H1 (cell line): ENCODE measurements at regions of chr14 and their contacts with region 1.

Region 1: DNA sequence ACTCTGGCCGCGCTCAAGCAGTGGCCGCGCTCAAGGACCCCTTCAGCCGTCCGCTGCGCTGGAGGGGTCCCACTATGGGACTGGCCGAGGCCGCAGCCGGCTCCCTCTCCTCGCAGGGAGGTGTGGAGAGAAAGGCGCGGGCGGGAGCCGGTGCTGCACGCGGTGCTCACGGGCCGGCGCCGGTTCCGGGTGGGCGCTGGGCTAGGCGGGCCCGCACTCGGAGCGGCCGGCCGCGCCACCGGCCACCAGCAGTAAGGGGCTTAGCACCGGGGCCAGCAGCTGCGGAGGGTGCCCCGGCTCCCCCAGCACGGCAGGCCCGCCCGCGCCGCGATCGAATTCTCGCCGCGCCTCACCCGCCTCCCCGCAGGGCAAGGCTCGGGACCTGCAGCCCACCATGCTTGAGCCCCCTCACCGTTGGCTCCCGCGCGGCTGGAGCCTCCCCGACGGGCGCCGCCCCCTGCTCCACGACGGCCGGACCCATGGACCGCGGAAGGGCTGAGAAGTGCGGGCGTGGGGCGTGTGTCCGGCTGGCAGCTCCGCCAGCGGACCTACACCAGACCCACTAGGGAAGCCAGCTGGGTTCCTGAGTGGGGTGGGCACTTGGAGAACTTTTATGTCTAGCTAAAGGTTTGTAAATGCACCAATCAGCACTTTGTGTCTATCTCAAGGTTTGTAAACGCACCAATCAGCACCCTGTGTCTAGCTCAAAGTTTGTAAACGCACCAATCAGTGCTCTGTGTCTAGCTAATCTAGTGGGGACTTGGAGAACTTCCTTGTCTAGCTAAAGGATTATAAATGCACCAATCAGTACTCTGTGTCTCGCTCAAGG is 49.5 kb downstream of the KLHL28 start:
- DNase-seq: no peak
- H3K4me3 ChIP-seq: no peak overlapping the region
- H3K27ac ChIP-seq: no peak overlapping the region
- H3K4me1 ChIP-seq: peaks cover 0 to 2% (median 0%) of the 10 kb centered on the region in 4 experiments; a peak in 1 of 7 replicates
- H3K27me3 ChIP-seq: no peaks in the 10 kb centered on the region
- CTCF ChIP-seq: no peak
- EP300 ChIP-seq: no peak
- POLR2A ChIP-seq: no peak
- RAD21 ChIP-seq: no peak

Region 2: GRCh38 chr14:45083971-45084722 is 171.9 kb after region 1 on chr14 and contains the start of gene PRPF39:
- CTCF ChIA-PET with region 1: interaction called, 10 read pairs
- POLR2A ChIA-PET with region 1: interaction called, 4 read pairs
- DNase-seq: peak; percentile 72 to 96
- H3K4me3 ChIP-seq: peak within 1 kb of the TSS; percentile 82 to 90 (median 86)
- H3K27ac ChIP-seq: peak within 1 kb of the TSS; percentile 81
- H3K4me1 ChIP-seq: peaks cover 0 to 6% (median 4%) of the 10 kb centered on the region in 4 experiments; a peak in 3 of 7 replicates
- H3K27me3 ChIP-seq: no peaks in the 10 kb centered on the region
- CTCF ChIP-seq: no peak
- EP300 ChIP-seq: no peak
- POLR2A ChIP-seq: peak; percentile 88 to 95
- RAD21 ChIP-seq: no peak
- total RNA-seq, gene PRPF39: 36.7 and 43.3 TPM in 2 replicates

Region 3: DNA sequence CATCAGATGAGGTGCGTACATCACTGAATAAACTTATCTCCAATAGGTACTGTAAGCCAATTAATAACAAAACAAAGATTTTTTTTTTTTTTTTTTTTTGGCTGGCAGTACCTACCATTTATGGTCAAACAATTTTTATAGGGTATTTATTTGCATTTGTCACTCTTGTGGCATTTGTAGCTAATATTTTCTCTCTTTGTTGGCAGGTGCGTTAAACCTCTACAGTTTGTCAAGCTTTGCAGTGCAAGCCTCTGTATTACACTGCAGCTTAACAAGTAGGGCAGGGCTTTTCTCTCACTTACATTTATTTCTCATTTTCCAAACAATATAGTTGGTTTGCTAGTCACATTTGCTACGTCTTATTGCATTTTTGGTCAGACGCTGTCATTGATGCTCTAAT is 184.0 kb after region 1 on chr14:
- CTCF ChIA-PET with region 1: interaction called, 17 read pairs
- POLR2A ChIA-PET with region 1: no interaction called
- DNase-seq: no peak
- H3K4me3 ChIP-seq: no peak overlapping the region
- H3K27ac ChIP-seq: no peak overlapping the region
- H3K4me1 ChIP-seq: no peaks in the 10 kb centered on the region
- H3K27me3 ChIP-seq: no peaks in the 10 kb centered on the region
- CTCF ChIP-seq: no peak
- EP300 ChIP-seq: no peak
- POLR2A ChIP-seq: no peak
- RAD21 ChIP-seq: no peak

Region 4: DNA sequence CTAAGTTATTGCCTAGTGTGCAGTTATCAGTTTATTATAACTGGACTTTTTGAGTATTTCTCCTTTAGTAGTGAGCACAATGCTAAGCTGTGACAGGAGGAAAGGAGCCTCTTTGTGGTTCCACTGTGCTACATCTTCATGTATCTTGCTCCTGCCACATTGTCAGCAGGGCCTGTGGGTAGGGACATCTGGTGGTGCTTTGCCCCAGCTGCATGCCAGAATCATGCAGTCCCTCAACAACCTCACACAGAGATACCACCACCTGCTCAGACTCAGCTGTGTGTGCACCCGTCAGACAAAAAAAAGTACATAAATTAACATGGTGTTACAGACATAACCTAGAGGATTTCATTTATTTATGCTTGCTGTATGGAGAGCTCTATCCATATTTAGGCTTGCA is 289.6 kb after region 1 on chr14:
- CTCF ChIA-PET with region 1: interaction called, 13 read pairs
- POLR2A ChIA-PET with region 1: no interaction called
- DNase-seq: no peak
- H3K4me3 ChIP-seq: no peak overlapping the region
- H3K27ac ChIP-seq: no peak overlapping the region
- H3K4me1 ChIP-seq: no peaks in the 10 kb centered on the region
- H3K27me3 ChIP-seq: no peaks in the 10 kb centered on the region
- CTCF ChIP-seq: peak; percentile 32 to 58 (median 56); a peak in 3 of 4 replicates
- EP300 ChIP-seq: no peak
- POLR2A ChIP-seq: no peak
- RAD21 ChIP-seq: peak; percentile 38 to 49; a peak in 3 of 4 replicates